Caco-2 (cell line): ENCODE measurements at regions of chr4 and their contacts with region 1.

Region 1: DNA sequence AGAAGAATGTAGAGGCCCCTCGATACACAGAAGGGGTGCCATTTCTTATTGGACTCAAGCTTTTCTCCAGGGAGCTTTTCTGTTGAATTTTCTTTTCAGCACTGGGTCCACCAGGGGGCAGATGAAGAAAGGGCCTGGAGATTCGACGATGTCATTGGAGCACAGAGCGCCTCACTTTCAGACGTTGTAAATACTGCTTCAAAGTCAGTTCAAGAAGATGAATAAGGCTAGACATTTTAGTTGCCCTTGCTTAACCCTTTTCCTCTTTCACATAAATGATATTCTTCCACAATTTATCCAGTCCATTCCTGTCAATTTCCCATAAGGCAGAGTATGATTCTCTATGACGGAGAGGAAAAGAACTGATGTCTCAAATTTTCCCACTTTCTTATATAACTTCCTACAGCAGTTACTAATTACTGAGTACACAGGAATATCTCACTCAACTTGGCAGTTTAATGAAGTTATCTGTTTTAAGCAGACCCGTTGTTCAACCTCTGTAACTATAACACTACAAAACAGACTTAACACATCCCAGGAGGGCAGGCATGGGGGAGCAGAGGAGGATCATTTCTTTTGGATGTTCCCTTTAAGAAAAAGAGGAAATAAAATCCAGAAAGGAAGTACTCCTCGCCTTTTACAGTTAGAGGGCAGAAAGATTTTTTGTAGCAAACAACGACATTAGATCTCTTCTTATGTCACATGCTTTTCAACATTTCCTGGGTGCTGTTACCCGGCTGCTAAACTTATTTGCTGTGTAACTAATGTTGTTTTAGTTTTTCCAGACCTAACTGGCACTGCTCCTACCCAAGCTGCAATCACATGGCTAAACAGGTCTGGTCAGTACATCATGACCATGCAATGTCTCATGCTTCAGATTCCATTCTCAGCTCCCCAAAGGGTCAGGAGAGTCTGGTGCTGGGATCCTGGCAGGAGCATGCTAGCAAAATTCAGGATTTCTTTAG is 12.2 kb upstream of the CENPU start:
- DNase-seq: peak; percentile 75 to 80
- H3K4me3 ChIP-seq: no peak overlapping the region
- H3K4me3 Mint-ChIP-seq: peak overlapping the region; percentile 56
- H3K27ac Mint-ChIP-seq: peak overlapping the region; percentile 96
- H3K4me1 ChIP-seq: peaks cover 47% of the 10 kb centered on the region
- H3K4me1 Mint-ChIP-seq: peaks cover 36% of the 10 kb centered on the region
- H3K27me3 ChIP-seq: no peaks in the 10 kb centered on the region
- H3K27me3 Mint-ChIP-seq: no peaks in the 10 kb centered on the region
- CTCF ChIP-seq: peak; percentile 74 to 75

Region 2: DNA sequence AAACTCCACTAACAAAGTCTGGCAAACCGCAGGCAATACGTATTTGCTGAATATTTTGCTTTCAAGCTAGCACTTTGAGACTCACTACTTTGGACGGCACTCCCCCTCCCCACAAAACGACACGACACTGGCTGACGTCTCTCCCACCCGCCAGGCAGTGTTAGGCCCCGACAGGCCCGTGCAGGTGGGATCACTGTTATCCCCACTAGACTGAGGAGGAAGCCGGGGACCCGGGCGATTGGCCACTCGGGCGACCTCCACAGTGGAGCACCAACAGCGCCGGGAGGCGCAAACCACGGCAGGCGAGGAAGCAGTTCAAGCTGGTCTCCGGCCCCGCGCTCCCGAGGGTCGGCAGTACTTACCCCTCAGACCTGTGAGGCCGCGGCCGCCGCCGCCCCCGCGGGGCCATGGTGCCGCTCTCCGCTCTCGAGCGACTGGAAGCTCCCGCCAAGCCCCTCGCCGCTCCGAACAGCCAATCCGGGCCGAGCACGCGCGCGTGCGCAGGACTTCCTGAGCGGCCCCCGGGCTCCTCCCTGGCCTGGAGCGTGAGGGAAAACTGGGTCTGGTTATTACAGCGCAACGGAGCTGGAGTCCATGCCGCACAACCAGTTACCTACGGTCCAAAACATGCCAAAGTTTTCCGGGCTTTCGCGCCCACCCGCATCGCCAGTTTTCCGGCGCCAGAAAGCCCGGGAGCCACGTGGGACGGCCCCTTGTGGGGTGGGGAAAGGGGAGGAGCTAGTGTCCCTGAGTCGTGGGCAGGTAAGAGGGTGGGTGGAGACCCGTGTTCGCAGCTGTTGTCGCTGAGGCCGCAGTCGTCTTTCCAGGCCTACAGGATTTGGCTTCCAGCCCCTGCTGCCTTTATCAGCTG is 12.2 kb before region 1 on chr4 and contains the start of gene CENPU:
- CTCF ChIA-PET with region 1: interaction called, 33 read pairs
- POLR2A ChIA-PET with region 1: interaction called, 21 read pairs
- intact Hi-C with region 1: loop called (anchors 1 kb)
- DNase-seq: peak; percentile 97
- H3K4me3 ChIP-seq: peak within 1 kb of the TSS; percentile 64
- H3K4me3 Mint-ChIP-seq: peak within 1 kb of the TSS; percentile 99
- H3K27ac Mint-ChIP-seq: peak within 1 kb of the TSS; percentile 94
- H3K4me1 ChIP-seq: no peaks in the 10 kb centered on the region
- H3K4me1 Mint-ChIP-seq: no peaks in the 10 kb centered on the region
- H3K27me3 ChIP-seq: no peaks in the 10 kb centered on the region
- H3K27me3 Mint-ChIP-seq: no peaks in the 10 kb centered on the region
- CTCF ChIP-seq: no peak
- total RNA-seq, gene CENPU: 42.8 and 52.0 TPM in 2 replicates

Region 3: DNA sequence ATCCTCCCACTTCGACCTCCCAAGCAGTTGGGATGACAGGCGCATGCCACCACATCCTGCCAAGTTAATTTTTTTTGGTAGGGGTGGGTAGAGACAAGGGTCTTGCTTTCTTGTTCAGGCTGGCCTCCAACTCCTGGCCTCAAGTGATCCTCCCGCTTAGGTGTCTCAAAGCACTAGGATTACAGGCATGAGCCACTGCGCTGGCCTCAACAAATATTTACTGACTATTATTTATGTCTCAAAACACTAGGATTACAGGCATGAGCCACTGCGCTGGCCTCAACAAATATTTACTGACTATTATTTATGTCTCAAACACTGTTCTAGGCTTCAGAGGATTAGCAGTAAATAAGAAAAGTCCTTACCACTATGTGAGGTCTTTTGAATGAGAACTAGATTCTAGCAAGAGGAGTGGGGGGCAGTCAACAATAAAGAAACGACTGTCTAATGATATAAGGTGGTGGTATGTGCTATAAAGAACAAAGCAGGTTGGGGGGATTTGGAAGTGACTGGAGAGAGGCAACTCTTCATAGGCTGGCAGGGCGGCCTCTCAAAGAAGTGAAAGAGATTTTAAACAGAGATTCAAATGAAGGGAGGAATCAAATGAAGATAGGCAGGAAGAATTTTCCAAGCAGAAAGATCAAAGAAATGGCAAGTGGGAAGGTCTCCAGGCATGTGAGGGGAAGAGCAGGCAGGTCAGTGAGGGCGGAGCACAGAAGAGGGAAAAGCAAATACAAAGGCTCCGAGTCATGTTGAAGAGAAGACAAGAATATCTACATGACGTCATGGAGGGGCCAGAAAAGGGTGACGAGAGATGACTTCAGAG is 92.3 kb after region 1 on chr4:
- CTCF ChIA-PET with region 1: no interaction called
- POLR2A ChIA-PET with region 1: no interaction called
- intact Hi-C with region 1: loop called (anchors 1 kb)
- DNase-seq: peak; percentile 89 to 90
- H3K4me3 ChIP-seq: no peak overlapping the region
- H3K4me3 Mint-ChIP-seq: peak overlapping the region; percentile 52
- H3K27ac Mint-ChIP-seq: peak overlapping the region; percentile 93
- H3K4me1 ChIP-seq: peaks cover 40% of the 10 kb centered on the region
- H3K4me1 Mint-ChIP-seq: peaks cover 27% of the 10 kb centered on the region
- H3K27me3 ChIP-seq: no peaks in the 10 kb centered on the region
- H3K27me3 Mint-ChIP-seq: no peaks in the 10 kb centered on the region
- CTCF ChIP-seq: no peak

Region 4: GRCh38 chr4:184937745-184938144 is 191.6 kb after region 1 on chr4:
- CTCF ChIA-PET with region 1: interaction called, 4 read pairs
- POLR2A ChIA-PET with region 1: no interaction called
- intact Hi-C with region 1: loop called (anchors 1 kb)
- DNase-seq: peak in 1 of 2 experiments; percentile 23
- H3K4me3 ChIP-seq: no peak overlapping the region
- H3K4me3 Mint-ChIP-seq: no peak overlapping the region
- H3K27ac Mint-ChIP-seq: peak overlapping the region; percentile 85
- H3K4me1 ChIP-seq: peaks cover 39% of the 10 kb centered on the region
- H3K4me1 Mint-ChIP-seq: peaks cover 36% of the 10 kb centered on the region
- H3K27me3 ChIP-seq: no peaks in the 10 kb centered on the region
- H3K27me3 Mint-ChIP-seq: no peaks in the 10 kb centered on the region
- CTCF ChIP-seq: no peak

Region 5: DNA sequence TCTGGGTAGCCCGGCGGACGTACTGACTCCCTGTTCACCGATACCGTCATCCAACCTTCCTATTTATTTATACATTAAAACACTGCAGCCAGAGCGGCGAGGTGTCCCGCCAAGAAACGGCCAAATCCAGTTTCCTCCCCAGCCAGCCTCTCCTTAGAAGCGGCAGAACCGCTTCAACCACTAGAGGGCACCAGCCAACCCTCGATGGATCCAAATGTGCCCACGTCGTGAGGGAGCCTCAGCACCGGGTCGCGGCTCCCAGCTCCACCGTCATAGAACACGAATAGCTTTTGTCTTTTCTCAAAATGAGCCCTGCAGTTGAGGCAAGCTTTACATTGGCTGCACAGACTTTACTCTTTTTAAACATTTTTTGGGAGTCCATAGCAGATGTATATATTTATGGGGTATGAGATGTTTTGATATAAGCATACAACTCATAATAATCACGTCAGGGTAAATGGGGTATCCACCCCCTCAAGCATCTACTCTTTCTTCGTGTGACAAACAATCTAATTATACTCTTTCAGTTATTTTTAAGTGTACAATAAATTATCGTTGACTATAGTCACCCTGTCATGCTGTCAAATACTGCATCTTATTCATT is 259.2 kb after region 1 on chr4:
- CTCF ChIA-PET with region 1: interaction called, 11 read pairs
- POLR2A ChIA-PET with region 1: no interaction called
- intact Hi-C with region 1: loop called (anchors 2 kb)
- DNase-seq: peak; percentile 74 to 80
- H3K4me3 ChIP-seq: no peak overlapping the region
- H3K4me3 Mint-ChIP-seq: peak overlapping the region; percentile 2
- H3K27ac Mint-ChIP-seq: no peak overlapping the region
- H3K4me1 ChIP-seq: no peaks in the 10 kb centered on the region
- H3K4me1 Mint-ChIP-seq: no peaks in the 10 kb centered on the region
- H3K27me3 ChIP-seq: no peaks in the 10 kb centered on the region; the same call in 1 of the 2 replicates
- H3K27me3 Mint-ChIP-seq: peaks cover 19% of the 10 kb centered on the region
- CTCF ChIP-seq: peak; percentile 81 to 88

Region 6: DNA sequence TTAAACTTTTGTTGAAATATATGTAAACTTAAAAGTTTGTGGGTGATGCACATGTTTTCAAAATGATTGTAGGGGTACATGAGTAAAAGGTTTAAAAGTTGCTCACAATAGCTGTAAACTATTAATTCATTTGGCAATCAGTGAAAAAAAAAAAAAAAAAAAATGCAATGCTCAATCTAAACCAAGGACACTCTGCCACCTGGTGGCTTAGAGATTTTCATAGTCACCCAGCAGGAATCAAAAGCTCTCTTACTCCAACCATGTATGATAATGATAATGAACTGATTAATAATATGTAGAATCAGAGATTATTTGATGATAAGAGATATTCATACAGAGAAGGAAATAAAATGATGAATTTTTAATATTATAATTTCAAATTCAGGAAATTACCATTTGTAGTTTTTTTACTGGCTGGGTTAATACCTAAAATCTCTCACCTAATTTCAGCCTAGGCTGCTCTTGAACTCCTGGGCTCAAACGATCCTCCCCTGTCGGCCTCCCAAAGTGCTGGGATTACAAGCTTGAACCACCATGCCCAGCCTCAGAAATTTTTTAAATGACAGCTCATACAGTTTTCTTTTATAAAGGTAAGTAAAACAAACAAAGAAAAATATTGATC is 350.0 kb after region 1 on chr4:
- CTCF ChIA-PET with region 1: interaction called, 6 read pairs
- POLR2A ChIA-PET with region 1: no interaction called
- intact Hi-C with region 1: loop called (anchors 5 kb)
- DNase-seq: peak in 1 of 2 experiments; percentile 40
- H3K4me3 ChIP-seq: no peak overlapping the region
- H3K4me3 Mint-ChIP-seq: no peak overlapping the region
- H3K27ac Mint-ChIP-seq: no peak overlapping the region
- H3K4me1 ChIP-seq: no peaks in the 10 kb centered on the region
- H3K4me1 Mint-ChIP-seq: no peaks in the 10 kb centered on the region
- H3K27me3 ChIP-seq: no peaks in the 10 kb centered on the region
- H3K27me3 Mint-ChIP-seq: peaks cover 3% of the 10 kb centered on the region
- CTCF ChIP-seq: peak; percentile 48 to 51